Left ventricle myocardium inferior (tissue), 1 donor: ENCODE measurements at regions of chr1 and their contacts with region 1.

Region 1: GRCh38 chr1:43763497-43763973 is 56.2 kb downstream of the ST3GAL3 start:
- DNase-seq: peak; percentile 30
- H3K4me3 ChIP-seq: no peak overlapping the region
- H3K27ac ChIP-seq: no peak overlapping the region
- H3K4me1 ChIP-seq: peaks cover 17% of the 10 kb centered on the region
- H3K27me3 ChIP-seq: no peaks in the 10 kb centered on the region
- CTCF ChIP-seq: peak; percentile 88

Region 2: DNA sequence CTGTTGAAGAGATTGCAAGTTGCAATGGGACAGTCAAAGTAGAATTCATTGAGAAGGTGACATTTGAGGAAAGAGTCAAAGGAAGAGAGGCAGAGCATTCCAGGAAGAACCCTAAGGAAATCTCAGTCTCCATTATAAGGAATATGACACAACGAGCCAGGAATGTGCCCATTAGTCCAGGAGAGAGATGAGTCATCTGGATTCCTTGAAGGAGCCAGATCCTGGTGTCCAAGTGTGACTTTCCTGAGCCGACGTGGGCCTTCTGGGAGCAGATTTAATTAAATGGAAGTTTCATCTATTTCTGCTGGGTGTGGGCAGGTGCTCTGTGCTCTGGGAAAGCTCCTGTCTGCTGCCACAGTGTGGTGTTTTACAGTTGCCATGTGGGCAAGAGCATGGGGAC is 58.5 kb after region 1 on chr1:
- intact Hi-C with region 1: no loop called
- DNase-seq: no peak
- H3K4me3 ChIP-seq: no peak overlapping the region
- H3K27ac ChIP-seq: no peak overlapping the region
- H3K4me1 ChIP-seq: peaks cover 28% of the 10 kb centered on the region
- H3K27me3 ChIP-seq: no peaks in the 10 kb centered on the region
- CTCF ChIP-seq: no peak

Region 3: DNA sequence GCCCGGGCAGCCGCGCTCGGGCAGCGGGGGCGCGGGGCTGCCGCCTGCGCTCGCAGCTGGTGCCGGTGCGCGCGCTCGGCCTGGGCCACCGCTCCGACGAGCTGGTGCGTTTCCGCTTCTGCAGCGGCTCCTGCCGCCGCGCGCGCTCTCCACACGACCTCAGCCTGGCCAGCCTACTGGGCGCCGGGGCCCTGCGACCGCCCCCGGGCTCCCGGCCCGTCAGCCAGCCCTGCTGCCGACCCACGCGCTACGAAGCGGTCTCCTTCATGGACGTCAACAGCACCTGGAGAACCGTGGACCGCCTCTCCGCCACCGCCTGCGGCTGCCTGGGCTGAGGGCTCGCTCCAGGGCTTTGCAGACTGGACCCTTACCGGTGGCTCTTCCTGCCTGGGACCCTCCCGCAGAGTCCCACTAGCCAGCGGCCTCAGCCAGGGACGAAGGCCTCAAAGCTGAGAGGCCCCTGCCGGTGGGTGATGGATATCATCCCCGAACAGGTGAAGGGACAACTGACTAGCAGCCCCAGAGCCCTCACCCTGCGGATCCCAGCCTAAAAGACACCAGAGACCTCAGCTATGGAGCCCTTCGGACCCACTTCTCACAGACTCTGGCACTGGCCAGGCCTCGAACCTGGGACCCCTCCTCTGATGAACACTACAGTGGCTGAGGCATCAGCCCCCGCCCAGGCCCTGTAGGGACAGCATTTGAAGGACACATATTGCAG is 173.1 kb after region 1 on chr1:
- intact Hi-C with region 1: loop called (anchors 5 kb)
- DNase-seq: peak; percentile 26
- H3K4me3 ChIP-seq: peak overlapping the region; percentile 62
- H3K27ac ChIP-seq: no peak overlapping the region
- H3K4me1 ChIP-seq: peaks cover 48% of the 10 kb centered on the region
- H3K27me3 ChIP-seq: peaks cover 40% of the 10 kb centered on the region
- CTCF ChIP-seq: no peak

Region 4: GRCh38 chr1:44049839-44050238 is 286.3 kb after region 1 on chr1:
- intact Hi-C with region 1: loop called (anchors 10 kb)
- DNase-seq: no peak
- H3K4me3 ChIP-seq: no peak overlapping the region
- H3K27ac ChIP-seq: no peak overlapping the region
- H3K4me1 ChIP-seq: peaks cover 4% of the 10 kb centered on the region
- H3K27me3 ChIP-seq: peaks cover 3% of the 10 kb centered on the region
- CTCF ChIP-seq: no peak